ENCODE measurements at regions of chr11 and their contacts with region 1.

Region 1: GRCh38 chr11:125568970-125569914 is at the start of gene EI24:
- DNase-seq: peak; percentile 77
- ATAC-seq: peak; percentile 100
- H3K4me3 ChIP-seq: peak within 1 kb of the TSS; percentile 87 to 98
- H3K27ac ChIP-seq: peak within 1 kb of the TSS; percentile 96
- H3K4me1 ChIP-seq: peaks cover 12% of the 10 kb centered on the region
- H3K27me3 ChIP-seq: no peaks in the 10 kb centered on the region
- CTCF ChIP-seq: peak; percentile 87
- total RNA-seq, gene EI24: 193 TPM

Region 2: GRCh38 chr11:125517116-125517804 is 52.0 kb before region 1 on chr11:
- CTCF ChIA-PET with region 1: interaction called, 10 read pairs
- POLR2A ChIA-PET with region 1: no interaction called
- in situ Hi-C with region 1: no loop called
- intact Hi-C with region 1: no loop called
- DNase-seq: no peak
- ATAC-seq: no peak
- H3K4me3 ChIP-seq: no peak overlapping the region
- H3K27ac ChIP-seq: no peak overlapping the region
- H3K4me1 ChIP-seq: no peaks in the 10 kb centered on the region
- H3K27me3 ChIP-seq: no peaks in the 10 kb centered on the region
- CTCF ChIP-seq: no peak

Region 3: GRCh38 chr11:125625630-125626287 is 56.5 kb after region 1 on chr11:
- CTCF ChIA-PET with region 1: no interaction called
- POLR2A ChIA-PET with region 1: no interaction called
- in situ Hi-C with region 1: no loop called
- intact Hi-C with region 1: no loop called
- DNase-seq: peak; percentile 85
- ATAC-seq: peak; percentile 92
- H3K4me3 ChIP-seq: peak overlapping the region; percentile 67 to 74
- H3K27ac ChIP-seq: peak overlapping the region; percentile 87
- H3K4me1 ChIP-seq: peaks cover 29% of the 10 kb centered on the region
- H3K27me3 ChIP-seq: no peaks in the 10 kb centered on the region
- CTCF ChIP-seq: no peak

Region 4: DNA sequence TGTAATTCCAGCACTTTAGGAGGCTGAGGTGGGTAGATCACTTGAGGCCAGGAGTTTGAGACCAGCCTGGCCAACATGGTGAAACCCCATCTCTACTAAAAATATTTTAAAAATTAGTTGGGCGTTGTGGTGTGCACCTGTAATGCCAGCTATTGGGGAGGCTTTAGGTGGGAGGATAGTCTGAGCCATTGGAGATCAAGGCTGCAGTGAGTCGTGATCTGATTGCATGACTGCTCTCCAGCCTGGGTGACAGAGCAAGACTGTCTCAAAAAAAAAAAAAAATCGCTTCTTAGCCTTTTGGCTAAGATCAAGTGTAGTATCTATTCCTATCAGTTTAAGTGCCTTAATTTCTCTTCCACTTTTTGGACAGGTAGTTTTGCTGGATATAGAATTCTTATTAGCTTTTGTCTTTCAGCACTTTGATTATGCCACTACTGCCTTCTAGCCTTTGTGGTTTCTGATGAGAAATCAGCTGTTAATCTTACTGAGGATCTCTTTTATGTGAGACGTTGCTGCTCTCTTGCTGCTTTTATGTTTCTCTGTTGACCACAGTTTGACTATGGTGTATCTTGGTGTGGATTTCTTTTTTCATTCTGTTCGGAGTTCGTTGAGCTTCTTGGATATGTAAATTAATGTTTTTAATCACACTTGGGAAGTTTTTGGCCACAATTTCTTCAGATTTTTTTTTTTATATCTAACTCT is 80.4 kb after region 1 on chr11:
- CTCF ChIA-PET with region 1: no interaction called
- POLR2A ChIA-PET with region 1: no interaction called
- in situ Hi-C with region 1: no loop called
- intact Hi-C with region 1: no loop called
- DNase-seq: no peak
- ATAC-seq: no peak
- H3K4me3 ChIP-seq: no peak overlapping the region
- H3K27ac ChIP-seq: no peak overlapping the region
- H3K4me1 ChIP-seq: no peaks in the 10 kb centered on the region
- H3K27me3 ChIP-seq: no peaks in the 10 kb centered on the region
- CTCF ChIP-seq: no peak

Region 5: DNA sequence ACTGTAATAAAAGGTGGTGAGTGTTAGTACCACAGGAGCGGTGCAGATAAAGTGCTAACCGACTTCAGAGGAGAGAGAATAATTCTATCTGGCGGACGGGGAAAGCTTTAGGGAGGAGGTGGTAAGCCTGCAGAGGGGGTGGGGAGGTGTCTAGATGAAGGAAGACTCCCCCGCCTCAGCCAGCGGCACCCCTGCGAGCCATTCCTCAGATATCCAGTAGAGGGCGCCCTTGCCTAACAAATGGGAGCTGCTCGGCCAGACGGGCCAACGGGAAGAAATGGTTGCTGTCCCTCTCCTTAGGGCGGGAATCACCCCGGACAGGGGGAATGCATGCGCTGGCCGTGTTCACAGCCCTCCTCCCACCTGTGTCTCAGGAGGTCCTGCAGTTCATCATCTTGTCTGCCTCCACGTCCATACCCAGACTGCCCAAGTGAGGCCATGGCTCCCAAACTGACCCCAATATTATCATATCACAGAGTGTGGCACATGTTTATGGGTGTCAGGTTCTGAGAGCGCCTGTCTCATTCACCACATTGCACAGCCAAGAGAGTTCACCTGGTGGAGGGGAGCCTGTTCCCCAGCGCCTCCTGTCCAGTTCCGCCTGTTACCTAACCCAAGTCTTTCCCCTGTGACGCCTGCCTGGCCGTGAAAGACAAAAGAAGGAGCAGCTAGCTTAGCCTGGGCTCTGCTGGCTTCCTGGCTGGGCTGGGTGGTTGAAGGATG is 871.7 kb after region 1 on chr11:
- CTCF ChIA-PET with region 1: no interaction called
- POLR2A ChIA-PET with region 1: no interaction called
- in situ Hi-C with region 1: no loop called
- intact Hi-C with region 1: no loop called
- DNase-seq: peak; percentile 46
- ATAC-seq: peak; percentile 89
- H3K4me3 ChIP-seq: peak overlapping the region in 1 of 2 experiments; percentile 12; a peak in 1 of 4 replicates
- H3K27ac ChIP-seq: no peak overlapping the region
- H3K4me1 ChIP-seq: peaks cover 4% of the 10 kb centered on the region; the same call in 1 of the 2 replicates
- H3K27me3 ChIP-seq: no peaks in the 10 kb centered on the region
- CTCF ChIP-seq: peak; percentile 96

Measured in Panc1 (cell line).